MCF 10A (cell line): ENCODE measurements at regions of chr15 and their contacts with region 1.

Region 1: DNA sequence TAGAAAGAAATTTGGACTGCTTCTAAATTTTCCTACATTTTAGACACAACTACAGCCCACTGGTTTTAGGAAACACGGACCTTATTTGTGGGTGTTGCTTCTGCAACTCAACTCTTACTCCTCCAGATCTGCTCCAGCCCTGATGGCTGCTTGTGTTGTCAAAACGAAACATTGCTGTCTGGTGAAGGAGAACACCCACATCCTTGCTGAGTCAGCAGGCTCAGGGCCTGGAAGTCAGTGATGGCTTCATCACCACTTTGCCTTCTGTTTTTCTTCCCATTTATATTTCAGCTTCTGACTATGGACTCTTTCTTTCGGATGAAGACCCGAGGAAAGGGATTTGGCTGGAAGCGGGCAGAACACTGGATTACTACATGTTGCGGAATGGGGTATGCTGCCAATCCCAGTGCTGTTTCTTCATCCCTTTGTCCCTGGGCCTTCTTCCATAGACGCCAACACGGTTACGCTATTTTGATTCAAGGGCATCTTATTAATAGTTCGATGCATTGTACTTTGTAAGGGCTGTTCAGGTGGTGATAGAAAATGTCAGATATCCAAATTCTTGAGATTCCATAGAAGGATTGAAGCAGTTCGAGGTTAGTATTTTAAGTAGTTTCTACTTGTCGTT is 392.6 kb upstream of the TPM1 start:
- DNase-seq: no peak
- H3K4me3 Mint-ChIP-seq: no peak overlapping the region
- H3K27ac Mint-ChIP-seq: no peak overlapping the region
- H3K4me1 Mint-ChIP-seq: peaks cover 13% of the 10 kb centered on the region
- H3K27me3 Mint-ChIP-seq: no peaks in the 10 kb centered on the region
- CTCF ChIP-seq: no peak

Region 2: DNA sequence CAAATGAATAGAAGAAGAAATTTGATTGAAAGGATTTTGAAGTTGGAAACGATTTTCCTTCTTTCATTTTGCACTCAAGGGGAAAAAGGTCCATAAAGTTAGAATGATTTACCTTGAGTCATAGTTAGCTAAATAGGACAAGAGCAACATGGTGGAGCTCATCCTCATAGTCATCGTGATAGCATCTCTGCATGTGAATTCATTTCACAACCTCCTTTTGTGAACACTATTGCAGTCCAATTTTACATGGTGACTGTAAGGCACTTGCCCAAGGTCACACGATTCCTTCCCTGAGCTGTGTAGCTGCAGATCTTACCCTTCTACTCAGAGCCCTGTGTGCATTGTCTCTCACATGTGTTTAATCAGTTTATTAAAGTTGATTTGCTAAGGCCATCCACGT is 125.1 kb before region 1 on chr15:
- CTCF ChIA-PET with region 1: no interaction called
- POLR2A ChIA-PET with region 1: no interaction called
- intact Hi-C with region 1: loop called (anchors 10 kb)
- DNase-seq: peak; percentile 1
- H3K4me3 Mint-ChIP-seq: no peak overlapping the region
- H3K27ac Mint-ChIP-seq: no peak overlapping the region
- H3K4me1 Mint-ChIP-seq: no peaks in the 10 kb centered on the region
- H3K27me3 Mint-ChIP-seq: no peaks in the 10 kb centered on the region
- CTCF ChIP-seq: no peak

Region 3: DNA sequence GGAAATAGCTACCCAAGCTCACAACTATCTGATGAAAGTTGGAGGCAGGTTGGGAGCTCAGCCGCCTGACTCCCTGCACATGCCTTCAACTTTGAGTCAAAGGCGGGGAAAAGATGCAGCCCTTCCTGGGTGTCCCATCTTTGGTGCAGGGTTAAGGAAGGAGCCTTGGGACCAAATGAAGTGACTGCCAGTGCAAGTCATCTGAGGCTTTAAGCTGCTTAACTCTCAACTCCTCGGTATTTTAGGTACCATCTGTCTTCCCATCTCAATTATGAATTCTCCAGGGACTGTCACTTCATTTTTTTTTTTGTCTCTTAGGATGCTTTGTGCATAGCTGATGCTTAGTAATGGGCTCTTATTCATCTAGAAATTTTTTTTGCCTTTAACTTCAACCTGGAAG is 76.0 kb before region 1 on chr15:
- CTCF ChIA-PET with region 1: no interaction called
- POLR2A ChIA-PET with region 1: no interaction called
- intact Hi-C with region 1: no loop called
- DNase-seq: no peak
- H3K4me3 Mint-ChIP-seq: no peak overlapping the region
- H3K27ac Mint-ChIP-seq: no peak overlapping the region
- H3K4me1 Mint-ChIP-seq: peaks cover 15% of the 10 kb centered on the region
- H3K27me3 Mint-ChIP-seq: no peaks in the 10 kb centered on the region
- CTCF ChIP-seq: no peak